ENCODE measurements at regions of chr4 and their contacts with region 1.

Region 1: DNA sequence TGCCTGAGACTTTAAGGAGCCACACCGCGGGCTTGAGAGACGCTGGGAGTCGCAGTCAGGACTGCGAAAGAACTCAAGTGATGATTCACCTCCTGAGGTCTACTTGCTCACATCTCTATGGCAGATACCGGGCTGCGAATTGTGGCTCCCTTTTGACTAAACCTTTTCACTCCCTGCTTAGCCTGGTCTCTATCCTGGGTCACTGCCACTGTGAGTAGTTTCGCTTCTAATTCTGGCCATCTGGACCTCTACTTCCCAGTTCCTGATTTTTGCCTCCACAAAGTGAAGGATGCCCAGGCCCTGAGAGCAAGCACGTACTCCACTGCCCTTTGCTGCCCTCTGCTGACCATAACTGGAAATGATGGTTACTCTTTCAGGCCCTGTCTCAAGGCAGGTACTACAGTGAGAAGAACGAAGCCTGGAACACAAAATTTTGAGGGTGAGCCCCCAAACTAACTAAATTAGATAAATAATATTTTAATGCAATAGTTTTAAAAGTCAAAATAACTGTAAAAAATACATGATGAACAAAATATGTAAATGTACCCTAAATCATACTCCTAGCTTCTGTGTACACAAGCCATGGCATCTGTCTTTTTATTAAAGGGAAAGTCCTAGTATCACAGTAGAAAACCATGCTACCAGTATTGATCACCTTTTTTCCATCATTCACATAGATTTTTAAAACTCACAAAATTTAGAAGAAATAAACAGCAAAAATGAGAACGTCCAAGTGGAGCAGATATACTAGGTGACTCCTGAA is 16.7 kb downstream of the MAD2L1 start:
- DNase-seq: peak; percentile 32
- CTCF ChIP-seq: peak; percentile 86

Region 2: GRCh38 chr4:119314356-119314755 is 735.6 kb before region 1 on chr4:
- in situ Hi-C with region 1: loop called (anchors 10 kb)
- DNase-seq: peak; percentile 7
- CTCF ChIP-seq: peak; percentile 36

Region 3: GRCh38 chr4:119536572-119537528 is 513.1 kb before region 1 on chr4:
- in situ Hi-C with region 1: no loop called
- DNase-seq: no peak
- CTCF ChIP-seq: no peak

Region 4: GRCh38 chr4:119628308-119629141 is 421.4 kb before region 1 on chr4 and contains the start of gene PDE5A:
- in situ Hi-C with region 1: loop called (anchors 25 kb)
- DNase-seq: peak; percentile 85
- CTCF ChIP-seq: peak; percentile 93